Activated CD8-positive, alpha-beta T cell treated with anti-CD3 and anti-CD28 coated beads for 36 hours (primary cell): ENCODE measurements at regions of chr11 and their contacts with region 1.

Region 1: DNA sequence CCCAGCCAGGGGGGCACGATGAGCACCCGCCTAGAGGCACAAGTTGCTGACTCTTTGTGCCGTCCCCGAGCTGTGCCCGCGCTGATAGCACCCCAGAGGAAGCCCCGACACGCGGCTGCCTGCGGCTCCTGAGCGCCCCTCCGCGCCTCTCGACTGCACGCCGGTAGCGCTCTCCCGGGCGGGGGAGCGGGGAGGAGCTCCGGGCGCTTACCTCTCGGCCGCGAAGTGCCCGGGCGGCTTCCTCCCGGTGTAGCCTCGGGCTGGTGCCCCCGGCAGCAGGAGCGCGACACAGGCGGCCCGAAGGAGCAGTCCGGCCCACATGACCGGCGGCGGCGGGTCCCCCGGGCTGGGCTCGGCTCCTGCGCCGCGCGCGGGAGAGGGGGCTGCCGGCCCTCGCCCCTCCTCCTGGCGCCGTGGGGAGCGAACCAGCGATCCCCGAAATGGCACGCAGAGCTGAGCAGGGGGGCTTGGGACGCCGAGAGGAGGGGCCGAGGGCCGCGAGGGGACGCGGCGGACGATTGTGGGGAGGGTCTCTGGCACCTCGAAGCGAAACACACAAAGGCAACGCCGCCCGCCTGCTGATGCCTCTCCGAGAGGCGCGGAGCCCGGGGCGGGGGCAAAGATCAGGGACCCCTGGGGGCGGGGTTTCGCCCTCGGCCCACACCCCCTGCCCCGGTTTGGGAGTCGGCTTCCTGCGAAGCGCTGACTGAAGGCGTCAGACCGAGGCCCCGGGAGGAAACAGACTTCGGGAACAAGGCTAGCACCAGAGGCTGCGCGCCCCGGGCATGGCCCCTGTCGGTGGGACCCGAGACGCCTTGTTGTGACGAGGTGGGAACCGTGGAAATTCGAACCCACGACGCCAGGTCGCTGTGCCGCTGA is at the start of gene VWCE:
- DNase-seq: peak; percentile 88
- ATAC-seq: peak; percentile 83
- H3K4me3 Mint-ChIP-seq: peak within 1 kb of the TSS; percentile 92
- H3K27ac Mint-ChIP-seq: peak within 1 kb of the TSS; percentile 92
- H3K4me1 Mint-ChIP-seq: peaks cover 42% of the 10 kb centered on the region
- H3K27me3 Mint-ChIP-seq: peaks cover 5% of the 10 kb centered on the region
- CTCF ChIP-seq: peak; percentile 23
- total RNA-seq, gene VWCE: 23.3 to 25.8 TPM

Region 2: GRCh38 chr11:61281581-61282250 is 13.2 kb before region 1 on chr11:
- CTCF ChIA-PET with region 1: interaction called, 5 read pairs
- POLR2A ChIA-PET with region 1: interaction called, 23 read pairs
- intact Hi-C with region 1: no loop called
- DNase-seq: peak; percentile 51
- ATAC-seq: peak; percentile 98
- H3K4me3 Mint-ChIP-seq: no peak overlapping the region
- H3K27ac Mint-ChIP-seq: no peak overlapping the region
- H3K4me1 Mint-ChIP-seq: peaks cover 2% of the 10 kb centered on the region
- H3K27me3 Mint-ChIP-seq: no peaks in the 10 kb centered on the region
- CTCF ChIP-seq: no peak

Region 3: GRCh38 chr11:61309739-61310138 is 14.8 kb after region 1 on chr11:
- CTCF ChIA-PET with region 1: interaction called, 9 read pairs
- POLR2A ChIA-PET with region 1: interaction called, 24 read pairs
- intact Hi-C with region 1: no loop called
- DNase-seq: peak; percentile 28
- ATAC-seq: peak; percentile 83
- H3K4me3 Mint-ChIP-seq: no peak overlapping the region
- H3K27ac Mint-ChIP-seq: peak overlapping the region; percentile 19
- H3K4me1 Mint-ChIP-seq: no peaks in the 10 kb centered on the region
- H3K27me3 Mint-ChIP-seq: no peaks in the 10 kb centered on the region
- CTCF ChIP-seq: no peak